Mucosa of descending colon (tissue), 3 donors: ENCODE measurements at regions of chr1 and their contacts with region 1.

Region 1: DNA sequence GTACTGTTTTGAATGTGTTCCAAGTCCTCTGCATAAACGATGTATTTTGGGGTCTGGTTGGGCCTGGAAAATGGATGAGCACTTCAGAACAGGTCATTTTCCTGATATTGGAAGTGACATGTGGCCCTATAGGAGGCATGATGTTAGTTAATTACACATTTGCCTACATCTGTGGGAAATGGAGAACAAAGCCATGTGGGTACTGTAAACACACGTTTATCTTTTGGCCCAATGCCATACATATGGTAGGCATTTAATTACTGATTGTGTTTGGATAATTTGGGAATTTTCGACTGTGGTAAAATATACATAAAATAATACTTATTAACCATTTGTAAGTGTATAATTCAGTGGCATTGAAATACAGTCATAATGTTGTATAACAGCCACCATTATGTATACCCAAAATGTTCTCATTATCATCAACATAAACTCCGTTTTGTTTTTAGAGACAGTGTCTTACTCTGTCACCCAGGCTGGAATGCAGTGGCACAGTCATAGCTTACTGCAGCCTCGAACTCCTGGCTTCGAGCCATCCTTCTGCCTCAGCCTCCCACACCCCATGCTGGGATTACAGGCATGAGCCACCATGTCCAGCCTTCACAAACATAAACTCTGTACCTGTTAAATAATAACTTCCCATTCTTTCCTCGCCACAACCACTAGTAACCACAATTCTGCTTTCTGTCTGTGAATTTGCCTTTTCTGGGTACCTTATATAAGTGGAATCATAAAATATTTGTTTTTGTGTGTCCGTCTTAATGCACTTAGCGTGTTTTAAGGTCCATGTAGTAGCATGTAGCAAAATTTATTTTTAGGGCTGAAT is 11.9 kb upstream of the RNPEP start:
- DNase-seq: no peak
- ATAC-seq: no peak
- H3K4me3 ChIP-seq: no peak overlapping the region
- H3K4me1 ChIP-seq: no peaks in the 10 kb centered on the region
- CTCF ChIP-seq: no peak

Region 2: GRCh38 chr1:201877877-201878401 is 92.6 kb before region 1 on chr1:
- intact Hi-C with region 1: loop called (anchors 5 kb)
- DNase-seq: peak in 1 of 3 donors; percentile 67
- ATAC-seq: peak; percentile 79
- H3K4me3 ChIP-seq: no peak overlapping the region
- H3K4me1 ChIP-seq: no peaks in the 10 kb centered on the region
- CTCF ChIP-seq: peak; percentile 19